ENCODE measurements at regions of chr21 and their contacts with region 1.

Region 1: DNA sequence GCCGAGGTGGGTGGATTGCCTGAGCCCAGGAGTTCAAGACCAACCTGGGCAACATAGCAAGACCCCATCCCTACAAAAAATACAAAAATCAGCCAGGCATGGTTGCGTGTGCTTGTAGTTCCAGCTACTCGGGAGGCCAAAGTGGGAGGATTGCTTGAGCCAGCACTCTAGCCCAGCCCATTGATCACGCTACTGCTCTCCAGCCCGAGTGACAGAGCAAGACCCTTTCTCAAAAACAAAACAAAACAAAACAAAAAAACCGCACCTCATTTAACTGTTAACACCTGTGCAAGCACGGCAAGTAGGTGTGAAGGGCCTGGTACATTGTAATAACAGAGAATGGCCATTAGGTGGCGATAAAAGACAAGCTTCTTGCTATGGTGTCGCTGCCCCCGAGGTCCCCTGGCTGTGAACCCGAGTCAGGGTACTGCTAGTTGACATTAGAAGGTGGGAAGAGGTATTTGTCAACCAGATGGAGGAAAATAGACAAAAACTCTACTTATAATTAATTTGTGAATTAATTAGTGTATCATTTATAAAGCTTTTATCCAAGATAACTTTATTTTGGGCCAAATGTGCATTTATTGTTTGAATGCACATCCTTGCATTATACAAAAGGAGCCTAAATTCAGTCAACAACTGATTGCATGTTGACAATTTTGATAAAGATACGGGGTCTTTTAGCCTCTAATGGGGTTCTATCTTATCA is 66.5 kb downstream of the SH3BGR start:
- DNase-seq: peak in 4 of 10 donors; percentile 15 to 87 (median 38)

Region 2: GRCh38 chr21:39715804-39716397 is 197.6 kb after region 1 on chr21:
- intact Hi-C with region 1: loop called (anchors 1 kb)
- DNase-seq: peak in 5 of 10 donors; percentile 30 to 73 (median 58)